Panc1 (cell line): ENCODE measurements at regions of chr7 and their contacts with region 1.

Region 1: DNA sequence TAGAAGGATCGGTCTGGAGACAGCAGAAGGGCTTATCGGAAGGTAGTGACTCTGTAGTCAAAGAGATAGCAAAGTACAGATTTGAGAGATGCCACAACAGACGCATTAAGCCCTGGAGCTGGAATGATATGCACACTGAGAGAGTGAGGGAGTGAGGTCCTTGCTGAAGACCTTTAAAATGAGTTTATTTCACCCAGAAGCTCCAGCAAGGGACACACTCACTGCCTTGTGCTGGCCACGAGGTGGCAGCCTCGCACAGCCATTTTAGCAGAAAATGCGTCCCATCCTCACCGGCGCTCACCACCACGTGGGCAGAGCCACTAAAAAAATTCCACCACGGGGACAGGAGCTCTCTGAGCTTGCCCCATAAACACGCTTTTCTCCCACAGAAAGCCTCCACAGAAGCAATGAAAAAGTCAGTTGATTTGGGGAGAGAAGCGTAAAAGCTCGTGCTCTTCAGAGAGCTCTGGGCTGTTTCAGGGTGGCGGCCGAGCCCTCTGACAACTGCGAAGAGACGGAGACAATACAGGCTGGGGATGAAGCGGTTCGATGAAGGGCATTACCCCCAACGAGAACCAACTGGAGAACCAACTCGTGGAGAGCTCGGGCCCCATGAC is 163.0 kb upstream of the KLF14 start:
- DNase-seq: no peak
- ATAC-seq: peak; percentile 39
- H3K4me3 ChIP-seq: peak overlapping the region; percentile 7 to 25; a peak in 2 of 4 replicates
- H3K27ac ChIP-seq: peak overlapping the region; percentile 100
- H3K4me1 ChIP-seq: peaks cover 98% of the 10 kb centered on the region
- H3K27me3 ChIP-seq: no peaks in the 10 kb centered on the region
- CTCF ChIP-seq: peak; percentile 86

Region 2: DNA sequence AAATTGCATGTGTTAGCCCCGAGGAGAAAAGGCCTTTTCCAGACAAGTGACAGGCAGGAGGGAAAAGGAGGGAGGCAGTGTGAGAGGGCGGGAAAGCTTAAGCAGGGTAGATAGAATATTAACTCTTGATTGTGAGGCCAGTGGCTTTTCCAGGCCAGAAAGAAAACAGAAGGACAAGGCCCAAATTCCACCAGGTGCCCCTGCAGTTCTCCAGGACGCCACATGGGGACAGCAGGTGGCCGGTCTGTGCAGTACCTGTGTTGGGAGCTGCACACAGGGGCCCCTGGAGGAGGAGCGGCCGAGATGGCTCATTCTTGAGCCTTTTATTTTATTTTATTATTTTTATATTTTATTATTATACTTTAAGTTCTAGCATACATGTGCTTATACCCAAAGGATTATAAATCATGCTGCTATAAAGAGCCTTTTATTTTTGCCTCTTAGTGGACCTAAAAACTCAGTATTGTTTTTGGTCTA is 21.7 kb before region 1 on chr7:
- CTCF ChIA-PET with region 1: interaction called, 11 read pairs
- POLR2A ChIA-PET with region 1: no interaction called
- in situ Hi-C with region 1: no loop called
- intact Hi-C with region 1: no loop called
- DNase-seq: no peak
- ATAC-seq: peak; percentile 46
- H3K4me3 ChIP-seq: no peak overlapping the region
- H3K27ac ChIP-seq: peak overlapping the region; percentile 99
- H3K4me1 ChIP-seq: peaks cover 88% of the 10 kb centered on the region
- H3K27me3 ChIP-seq: no peaks in the 10 kb centered on the region
- CTCF ChIP-seq: peak; percentile 95

Region 3: GRCh38 chr7:130941322-130942210 is 44.6 kb after region 1 on chr7:
- CTCF ChIA-PET with region 1: interaction called, 11 read pairs
- POLR2A ChIA-PET with region 1: interaction called, 3 read pairs
- in situ Hi-C with region 1: no loop called
- intact Hi-C with region 1: loop called (anchors 5 kb)
- DNase-seq: peak; percentile 91
- ATAC-seq: peak; percentile 82
- H3K4me3 ChIP-seq: peak overlapping the region; percentile 67 to 83
- H3K27ac ChIP-seq: peak overlapping the region; percentile 99
- H3K4me1 ChIP-seq: peaks cover 74% of the 10 kb centered on the region
- H3K27me3 ChIP-seq: no peaks in the 10 kb centered on the region
- CTCF ChIP-seq: no peak

Region 4: GRCh38 chr7:130982160-130982638 is 85.2 kb after region 1 on chr7:
- CTCF ChIA-PET with region 1: interaction called, 15 read pairs
- POLR2A ChIA-PET with region 1: no interaction called
- in situ Hi-C with region 1: no loop called
- intact Hi-C with region 1: no loop called
- DNase-seq: no peak
- ATAC-seq: peak; percentile 88
- H3K4me3 ChIP-seq: no peak overlapping the region
- H3K27ac ChIP-seq: no peak overlapping the region
- H3K4me1 ChIP-seq: no peaks in the 10 kb centered on the region; the same call in 1 of the 2 replicates
- H3K27me3 ChIP-seq: no peaks in the 10 kb centered on the region
- CTCF ChIP-seq: peak; percentile 81; the same call in 1 of the 2 replicates

Region 5: GRCh38 chr7:131007394-131008330 is 110.7 kb after region 1 on chr7:
- CTCF ChIA-PET with region 1: no interaction called
- POLR2A ChIA-PET with region 1: interaction called, 13 read pairs
- in situ Hi-C with region 1: no loop called
- intact Hi-C with region 1: loop called (anchors 5 kb)
- DNase-seq: peak; percentile 88
- ATAC-seq: peak; percentile 95
- H3K4me3 ChIP-seq: peak overlapping the region; percentile 10 to 25; a peak in 3 of 4 replicates
- H3K27ac ChIP-seq: peak overlapping the region; percentile 95
- H3K4me1 ChIP-seq: peaks cover 54% of the 10 kb centered on the region
- H3K27me3 ChIP-seq: no peaks in the 10 kb centered on the region
- CTCF ChIP-seq: peak; percentile 77

Region 6: DNA sequence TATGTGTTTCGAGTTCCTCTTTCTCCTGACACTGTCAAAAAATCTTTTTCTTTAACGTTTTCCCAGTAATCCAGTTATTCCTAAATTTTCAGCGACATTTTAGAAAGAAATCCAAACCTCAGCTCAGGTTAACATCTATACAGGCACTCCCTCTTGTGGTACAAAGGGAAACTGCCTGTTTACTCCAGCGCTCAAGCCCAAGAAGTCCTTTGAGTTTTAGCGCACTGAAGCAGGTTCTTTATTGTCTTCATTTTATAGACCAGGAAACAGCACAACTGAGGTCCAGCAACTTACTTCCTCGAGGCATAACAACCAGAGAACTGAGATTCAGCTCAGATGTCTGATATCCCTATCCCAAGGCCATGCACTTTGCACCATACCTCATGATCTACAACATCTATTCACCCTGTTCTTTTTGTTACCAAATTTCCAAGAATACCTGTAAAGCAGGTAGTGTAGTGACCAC is 143.5 kb after region 1 on chr7:
- CTCF ChIA-PET with region 1: interaction called, 8 read pairs
- POLR2A ChIA-PET with region 1: no interaction called
- in situ Hi-C with region 1: no loop called
- intact Hi-C with region 1: loop called (anchors 2 kb)
- DNase-seq: peak; percentile 74
- ATAC-seq: peak; percentile 92
- H3K4me3 ChIP-seq: no peak overlapping the region
- H3K27ac ChIP-seq: peak overlapping the region; percentile 41; the same call in 1 of the 2 replicates
- H3K4me1 ChIP-seq: peaks cover 6% of the 10 kb centered on the region; the same call in 1 of the 2 replicates
- H3K27me3 ChIP-seq: no peaks in the 10 kb centered on the region
- CTCF ChIP-seq: peak; percentile 90